HepG2 (cell line): ENCODE measurements at regions of chr7 and their contacts with region 1.

Region 1: DNA sequence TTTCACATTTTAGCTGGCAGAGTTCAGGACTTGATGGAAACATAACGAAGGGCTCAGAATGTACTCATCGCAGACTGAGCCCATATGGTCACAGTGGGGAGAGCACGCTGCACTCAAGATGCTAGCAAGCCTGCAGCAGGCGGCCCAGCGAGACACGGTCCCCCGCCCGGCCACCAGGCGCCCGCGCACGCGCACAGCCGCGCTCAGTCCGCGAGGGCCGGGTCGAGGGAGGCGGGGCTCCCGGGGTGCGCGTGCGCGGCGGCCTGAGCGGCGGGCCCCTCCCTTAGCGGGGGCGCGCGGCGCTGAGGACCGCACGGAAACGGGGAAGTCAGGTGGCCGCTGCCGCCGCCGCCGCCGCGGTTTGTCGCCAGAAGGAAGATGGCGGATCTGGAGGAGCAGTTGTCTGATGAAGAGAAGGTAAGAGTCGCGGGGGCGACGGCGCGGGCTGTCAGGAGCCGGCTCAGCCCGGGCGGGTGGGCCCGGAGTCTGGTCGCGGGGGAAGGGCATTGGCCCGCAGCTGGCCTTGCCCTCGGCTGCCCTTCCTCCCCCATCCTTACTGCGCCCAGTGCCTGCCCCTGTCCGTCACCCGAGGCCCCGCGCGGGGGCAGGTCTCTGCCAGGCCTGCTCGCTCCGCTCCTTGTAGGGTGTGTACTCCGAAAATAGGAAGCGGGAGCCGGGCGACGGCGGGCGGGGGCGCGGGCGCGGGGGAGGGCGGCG is at the start of gene CAPZA2:
- DNase-seq: peak; percentile 78
- ATAC-seq: peak; percentile 92
- H3K4me3 ChIP-seq: peak within 1 kb of the TSS; percentile 88 to 98 (median 97)
- H3K27ac ChIP-seq: peak within 1 kb of the TSS; percentile 74
- H3K4me1 ChIP-seq: peaks cover 40% of the 10 kb centered on the region
- H3K27me3 ChIP-seq: no peaks in the 10 kb centered on the region; a peak in 1 of 5 replicates
- CTCF ChIP-seq: no peak
- EP300 ChIP-seq: peak in 1 of 2 experiments; percentile 53; a peak in 1 of 4 replicates
- POLR2A ChIP-seq: peak; percentile 64 to 85
- RAD21 ChIP-seq: no peak; the same call in 1 of the 2 replicates
- total RNA-seq, gene CAPZA2: 199 and 286 TPM in 2 replicates

Region 2: DNA sequence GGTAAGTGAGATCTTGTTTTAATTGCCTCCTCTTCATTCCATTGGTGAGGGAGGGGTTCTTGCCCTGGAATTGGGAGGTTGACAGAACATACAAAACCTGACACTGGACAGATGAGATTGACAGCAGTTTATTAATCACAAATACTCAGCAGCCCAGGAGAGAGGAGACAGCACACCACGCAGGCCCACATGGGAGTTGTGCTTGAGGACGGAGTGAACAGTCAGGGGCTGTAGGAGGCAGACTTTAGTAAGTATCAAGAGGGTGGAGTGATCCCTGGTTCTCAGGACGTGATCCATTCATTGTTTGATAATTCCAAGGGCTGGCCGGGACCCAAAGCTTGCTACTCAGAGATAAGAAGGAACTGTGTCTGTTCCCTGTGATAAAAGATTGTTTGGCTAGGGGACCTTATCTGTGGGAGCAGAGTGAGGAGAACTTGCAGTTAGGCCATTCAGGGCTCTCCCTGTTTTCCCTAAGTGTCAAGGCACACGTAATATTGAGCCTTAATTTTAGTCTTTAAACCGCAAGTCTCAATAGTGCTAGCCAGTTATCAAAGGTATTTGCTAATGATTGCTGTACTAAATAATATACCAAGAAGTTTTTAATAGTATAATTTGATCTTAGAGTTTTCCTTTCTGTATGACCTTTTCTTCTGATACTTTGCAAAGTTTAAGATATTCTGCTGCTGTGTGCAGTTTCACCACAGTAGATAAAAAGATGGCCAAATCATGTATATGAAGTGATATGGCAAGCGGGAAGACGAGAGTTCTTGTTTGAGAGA is 14.5 kb after region 1 on chr7:
- CTCF ChIA-PET with region 1: no interaction called
- POLR2A ChIA-PET with region 1: no interaction called
- in situ Hi-C with region 1: no loop called
- intact Hi-C with region 1: loop called (anchors 2 kb)
- DNase-seq: no peak
- ATAC-seq: peak; percentile 60
- H3K4me3 ChIP-seq: no peak overlapping the region
- H3K27ac ChIP-seq: no peak overlapping the region
- H3K4me1 ChIP-seq: peaks cover 29% of the 10 kb centered on the region
- H3K27me3 ChIP-seq: no peaks in the 10 kb centered on the region
- CTCF ChIP-seq: no peak
- EP300 ChIP-seq: no peak
- POLR2A ChIP-seq: no peak
- RAD21 ChIP-seq: no peak

Region 3: GRCh38 chr7:116911801-116912200 is 49.4 kb after region 1 on chr7:
- CTCF ChIA-PET with region 1: no interaction called
- POLR2A ChIA-PET with region 1: no interaction called
- in situ Hi-C with region 1: no loop called
- intact Hi-C with region 1: loop called (anchors 10 kb)
- DNase-seq: no peak
- ATAC-seq: no peak
- H3K4me3 ChIP-seq: no peak overlapping the region
- H3K27ac ChIP-seq: no peak overlapping the region
- H3K4me1 ChIP-seq: no peaks in the 10 kb centered on the region
- H3K27me3 ChIP-seq: no peaks in the 10 kb centered on the region
- CTCF ChIP-seq: no peak
- EP300 ChIP-seq: no peak
- POLR2A ChIP-seq: no peak
- RAD21 ChIP-seq: no peak